ENCODE measurements at regions of chr2 and their contacts with region 1.

Region 1: DNA sequence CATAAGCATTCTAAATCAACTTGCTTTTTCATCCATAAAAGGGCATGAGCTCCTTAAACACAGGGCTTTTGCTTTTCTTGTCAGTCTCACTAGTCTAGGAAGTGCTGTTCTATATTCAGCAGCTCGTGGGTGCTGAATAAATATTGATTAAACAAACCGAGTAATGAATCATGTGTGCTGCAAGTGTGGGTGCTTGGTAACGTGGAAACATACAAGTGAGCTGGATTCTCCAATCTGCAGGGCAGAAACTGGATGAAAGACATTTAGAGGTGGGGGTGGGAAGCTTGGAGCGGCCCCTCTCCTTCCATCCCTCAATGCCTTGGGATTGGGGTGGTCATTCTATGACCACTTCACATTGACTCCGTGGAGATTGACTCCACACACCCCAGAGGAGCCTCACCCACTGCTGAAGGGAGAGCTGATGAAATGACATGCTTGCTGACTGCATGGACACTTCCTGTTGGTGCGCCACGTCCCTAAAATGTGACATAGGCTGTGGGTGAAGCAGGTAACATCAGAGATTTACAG is 114.6 kb downstream of the DOCK10 start:
- DNase-seq: peak in 1 of 2 donors; percentile 89
- ATAC-seq: peak; percentile 51 to 75 (median 68)
- H3K4me3 ChIP-seq: no peak overlapping the region
- H3K4me3 Mint-ChIP-seq: peak overlapping the region; percentile 58
- H3K27ac ChIP-seq: peak overlapping the region; percentile 63
- H3K27ac Mint-ChIP-seq: peak overlapping the region; percentile 80 to 90
- H3K4me1 ChIP-seq: peaks cover 63% of the 10 kb centered on the region
- H3K4me1 Mint-ChIP-seq: peaks cover 95 to 96% of the 10 kb centered on the region in 2 donors
- H3K27me3 ChIP-seq: no peaks in the 10 kb centered on the region
- H3K27me3 Mint-ChIP-seq: no peaks in the 10 kb centered on the region
- CTCF ChIP-seq: no peak

Region 2: DNA sequence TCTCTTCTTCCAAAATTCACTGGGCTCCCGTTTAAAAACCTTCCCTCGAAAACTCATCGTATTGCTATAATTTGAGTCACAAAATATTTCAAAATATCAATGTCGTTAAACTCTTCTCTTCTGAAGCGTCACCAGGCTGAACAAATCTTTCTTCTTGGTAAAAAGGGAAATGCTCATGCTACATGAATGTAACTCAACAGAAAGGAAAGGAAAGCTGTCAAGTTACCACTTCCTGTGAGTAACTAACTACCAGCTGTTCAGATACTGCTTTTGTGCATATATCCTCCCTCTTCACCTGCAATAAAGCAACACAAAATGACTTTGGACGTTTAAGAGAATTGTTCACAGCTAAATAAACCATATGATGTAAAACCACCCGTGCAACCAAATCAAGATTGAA is 19.2 kb after region 1 on chr2:
- intact Hi-C with region 1: loop called (anchors 2 kb)
- DNase-seq: peak in 1 of 2 donors; percentile 79
- ATAC-seq: peak; percentile 86 to 92 (median 90)
- H3K4me3 ChIP-seq: peak overlapping the region; percentile 61
- H3K4me3 Mint-ChIP-seq: peak overlapping the region; percentile 96
- H3K27ac ChIP-seq: peak overlapping the region; percentile 87
- H3K27ac Mint-ChIP-seq: peak overlapping the region; percentile 85 to 87
- H3K4me1 ChIP-seq: peaks cover 35% of the 10 kb centered on the region
- H3K4me1 Mint-ChIP-seq: peaks cover 81 to 89% of the 10 kb centered on the region in 2 donors
- H3K27me3 ChIP-seq: no peaks in the 10 kb centered on the region
- H3K27me3 Mint-ChIP-seq: no peaks in the 10 kb centered on the region
- CTCF ChIP-seq: no peak

Region 3: DNA sequence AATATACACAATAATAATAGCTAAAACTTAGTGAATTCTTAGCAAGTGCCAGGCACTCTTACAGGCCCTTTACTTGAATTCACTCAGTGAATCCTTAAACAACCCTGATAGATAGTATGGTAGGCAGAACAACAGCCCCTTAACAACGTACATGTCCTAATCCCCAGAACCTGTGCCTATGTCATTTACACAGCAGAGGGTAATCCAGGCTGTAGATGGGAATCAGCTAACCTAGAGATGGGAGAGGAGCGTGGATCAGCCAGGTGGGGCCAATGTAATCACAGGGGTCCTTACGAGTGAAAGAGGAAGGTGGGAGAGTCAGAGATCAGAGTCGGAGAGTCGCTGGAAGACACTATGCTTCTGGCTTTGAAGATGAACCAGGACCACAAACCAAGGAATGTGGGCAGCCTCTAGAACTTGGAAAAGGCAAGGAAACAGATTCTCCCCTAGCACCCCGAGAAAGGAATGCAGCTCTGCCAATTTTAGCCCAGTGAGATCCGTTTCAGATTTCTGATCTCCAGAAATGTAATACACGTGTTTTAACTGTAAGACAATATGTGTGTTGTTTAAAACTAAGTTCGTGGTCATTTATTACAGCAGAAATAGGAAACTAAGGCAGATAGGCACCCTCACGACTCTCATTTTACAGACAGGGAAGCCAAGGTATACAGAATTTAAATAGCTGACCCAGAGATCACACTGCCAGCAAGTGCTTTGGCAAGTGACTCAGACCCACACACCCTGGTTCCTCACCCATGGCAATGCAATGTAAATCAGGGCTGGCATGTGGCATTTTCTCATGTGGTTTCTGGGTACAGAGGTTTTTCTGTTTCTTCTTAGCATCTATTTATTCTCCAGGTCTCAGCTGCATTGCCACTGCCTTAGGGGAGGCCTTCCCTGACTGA is 45.7 kb after region 1 on chr2:
- intact Hi-C with region 1: loop called (anchors 2 kb)
- DNase-seq: peak in 1 of 2 donors; percentile 47
- ATAC-seq: peak; percentile 66 to 76 (median 75)
- H3K4me3 ChIP-seq: no peak overlapping the region
- H3K4me3 Mint-ChIP-seq: peak overlapping the region; percentile 41
- H3K27ac ChIP-seq: peak overlapping the region; percentile 52
- H3K27ac Mint-ChIP-seq: peak overlapping the region; percentile 70 to 84
- H3K4me1 ChIP-seq: peaks cover 49% of the 10 kb centered on the region
- H3K4me1 Mint-ChIP-seq: peaks cover 82 to 83% of the 10 kb centered on the region in 2 donors
- H3K27me3 ChIP-seq: no peaks in the 10 kb centered on the region
- H3K27me3 Mint-ChIP-seq: no peaks in the 10 kb centered on the region
- CTCF ChIP-seq: no peak

Region 4: DNA sequence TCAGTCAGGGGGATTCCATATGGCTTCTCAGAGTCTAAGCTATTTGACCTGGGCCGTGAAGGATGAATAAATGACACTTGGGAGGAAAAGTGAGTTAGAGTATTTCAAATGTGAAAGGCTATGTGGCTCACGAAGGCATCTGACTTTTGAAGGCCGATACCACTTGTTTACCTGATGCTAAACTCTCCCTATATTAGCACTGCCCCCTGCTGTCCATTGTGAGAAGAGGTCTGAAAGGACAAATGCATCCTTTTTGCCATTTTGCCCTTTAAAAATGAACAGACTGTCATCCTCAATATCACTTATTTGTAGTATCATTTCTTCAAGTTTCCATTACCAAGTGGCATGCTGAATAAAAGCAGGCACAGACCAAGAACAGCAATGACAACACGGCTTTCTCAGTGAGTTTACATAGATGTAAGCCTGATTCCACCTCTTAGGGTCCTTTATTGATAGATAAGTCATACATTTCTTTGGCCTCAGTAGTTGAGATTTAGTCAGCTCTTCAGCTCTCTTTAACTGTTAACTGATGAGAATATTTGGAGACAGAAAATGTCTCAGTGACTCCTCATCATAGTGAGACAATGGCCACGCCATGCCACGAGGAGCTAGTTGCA is 74.4 kb after region 1 on chr2:
- intact Hi-C with region 1: loop called (anchors 1 kb)
- DNase-seq: peak; percentile 40 to 90
- ATAC-seq: peak; percentile 81 to 89 (median 82)
- H3K4me3 ChIP-seq: no peak overlapping the region
- H3K4me3 Mint-ChIP-seq: peak overlapping the region; percentile 53
- H3K27ac ChIP-seq: peak overlapping the region; percentile 45
- H3K27ac Mint-ChIP-seq: peak overlapping the region; percentile 74 to 89
- H3K4me1 ChIP-seq: peaks cover 22% of the 10 kb centered on the region
- H3K4me1 Mint-ChIP-seq: peaks cover 70 to 78% of the 10 kb centered on the region in 2 donors
- H3K27me3 ChIP-seq: no peaks in the 10 kb centered on the region
- H3K27me3 Mint-ChIP-seq: no peaks in the 10 kb centered on the region
- CTCF ChIP-seq: peak; percentile 78

Region 5: DNA sequence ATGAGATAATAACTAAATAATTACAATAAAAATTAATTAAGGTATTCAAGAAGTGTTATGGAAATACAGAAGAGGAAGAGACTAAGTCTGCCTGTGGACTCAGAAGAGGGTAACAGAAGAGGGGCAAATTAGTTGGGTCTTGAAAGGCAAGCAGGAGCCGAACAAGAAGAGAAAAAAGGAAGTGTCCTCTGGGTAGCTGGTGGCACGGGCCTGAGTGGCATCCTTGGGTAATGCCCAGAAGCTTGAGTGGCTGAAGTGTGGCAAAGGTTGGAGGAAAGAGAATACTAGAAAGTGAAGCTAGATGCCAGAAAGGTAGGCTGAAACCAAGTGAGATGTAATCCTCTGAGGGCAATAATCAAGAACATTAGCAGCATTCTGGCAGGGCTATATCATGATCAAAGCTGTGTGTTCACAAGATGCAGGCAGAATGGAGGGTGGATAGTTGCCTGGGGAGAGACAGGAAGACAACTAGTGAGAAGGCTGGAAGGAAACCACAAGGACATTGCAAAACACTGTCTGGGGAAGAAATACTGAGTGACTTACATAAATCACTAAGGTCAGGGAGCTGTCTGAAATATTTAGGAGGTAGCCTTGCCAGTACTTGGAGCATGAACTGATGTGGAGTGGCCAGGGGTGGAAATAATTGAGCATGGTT is 98.3 kb after region 1 on chr2:
- intact Hi-C with region 1: loop called (anchors 2 kb)
- DNase-seq: peak in 1 of 2 donors; percentile 55
- ATAC-seq: peak; percentile 12 to 51 (median 27)
- H3K4me3 ChIP-seq: no peak overlapping the region
- H3K4me3 Mint-ChIP-seq: peak overlapping the region; percentile 47
- H3K27ac ChIP-seq: peak overlapping the region; percentile 72
- H3K27ac Mint-ChIP-seq: peak overlapping the region; percentile 76 to 95
- H3K4me1 ChIP-seq: peaks cover 51% of the 10 kb centered on the region
- H3K4me1 Mint-ChIP-seq: peaks cover 70 to 77% of the 10 kb centered on the region in 2 donors
- H3K27me3 ChIP-seq: no peaks in the 10 kb centered on the region
- H3K27me3 Mint-ChIP-seq: no peaks in the 10 kb centered on the region
- CTCF ChIP-seq: no peak

Region 6: GRCh38 chr2:225041851-225042799 is 114.4 kb after region 1 on chr2 and contains the start of gene DOCK10:
- intact Hi-C with region 1: loop called (anchors 5 kb)
- DNase-seq: peak; percentile 37 to 78
- ATAC-seq: peak; percentile 47 to 73 (median 53)
- H3K4me3 ChIP-seq: peak within 1 kb of the TSS; percentile 86
- H3K4me3 Mint-ChIP-seq: peak within 1 kb of the TSS; percentile 98
- H3K27ac ChIP-seq: peak within 1 kb of the TSS; percentile 95
- H3K27ac Mint-ChIP-seq: peak within 1 kb of the TSS; percentile 100
- H3K4me1 ChIP-seq: peaks cover 18% of the 10 kb centered on the region
- H3K4me1 Mint-ChIP-seq: peaks cover 55 to 56% of the 10 kb centered on the region in 2 donors
- H3K27me3 ChIP-seq: no peaks in the 10 kb centered on the region
- H3K27me3 Mint-ChIP-seq: peaks cover 0 to 5% of the 10 kb centered on the region in 2 donors
- CTCF ChIP-seq: no peak
- total RNA-seq, gene DOCK10: 181 to 213 (median 182) TPM

Region 7: DNA sequence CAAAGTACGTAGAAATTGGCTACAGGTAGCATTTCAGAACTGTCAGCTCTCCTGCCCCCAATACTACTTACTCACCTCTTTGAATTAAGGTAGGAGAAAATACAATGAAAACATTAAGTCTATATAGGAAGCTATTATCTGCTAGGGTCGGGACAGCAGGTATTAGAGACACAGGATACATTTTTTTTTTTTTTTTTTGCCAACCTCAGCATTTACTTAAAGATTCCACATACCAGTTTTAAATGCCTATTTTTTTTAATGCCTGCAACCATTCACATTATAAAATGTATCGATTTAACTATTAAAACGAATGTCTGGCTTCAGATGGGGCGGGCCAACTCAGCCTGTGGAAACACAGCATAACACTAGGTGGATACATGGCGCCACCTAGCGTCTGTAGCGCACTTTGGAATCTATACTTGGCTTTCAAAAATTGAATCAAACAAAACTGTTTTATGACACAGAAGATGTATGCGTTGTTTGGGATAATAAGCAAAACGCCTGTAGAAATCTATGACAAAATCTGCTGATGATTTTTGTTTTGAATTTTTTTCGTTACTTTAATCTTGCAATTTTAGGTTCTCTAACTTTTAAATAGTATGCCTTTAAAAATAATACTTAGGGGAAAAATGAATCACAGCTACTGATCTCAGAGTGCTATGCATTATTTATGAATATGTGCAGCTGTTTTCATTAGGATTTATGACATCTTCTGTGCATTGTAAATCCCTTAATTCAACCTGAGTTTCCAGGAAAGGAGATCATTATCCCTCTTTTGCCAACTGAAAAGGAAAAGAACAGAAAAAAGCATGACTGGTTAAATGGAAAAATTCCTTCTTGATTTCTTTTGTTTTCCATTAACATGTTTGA is 732.8 kb after region 1 on chr2:
- intact Hi-C with region 1: loop called (anchors 2 kb)
- DNase-seq: peak; percentile 43 to 84
- ATAC-seq: peak; percentile 59 to 73 (median 62)
- H3K4me3 ChIP-seq: no peak overlapping the region
- H3K4me3 Mint-ChIP-seq: no peak overlapping the region
- H3K27ac ChIP-seq: no peak overlapping the region
- H3K27ac Mint-ChIP-seq: no peak overlapping the region
- H3K4me1 ChIP-seq: no peaks in the 10 kb centered on the region
- H3K4me1 Mint-ChIP-seq: no peaks in the 10 kb centered on the region
- H3K27me3 ChIP-seq: no peaks in the 10 kb centered on the region
- H3K27me3 Mint-ChIP-seq: peaks cover 8 to 12% of the 10 kb centered on the region in 2 donors
- CTCF ChIP-seq: peak; percentile 76

Measured in natural killer cell (primary cell).